Prostate gland (tissue), 2 donors: ENCODE measurements at regions of chr9 and their contacts with region 1.

Region 1: GRCh38 chr9:96566498-96567207 is 53.0 kb downstream of the CDC14B start:
- DNase-seq: peak; percentile 69
- H3K4me3 ChIP-seq: peak overlapping the region; percentile 57 to 67
- H3K27ac ChIP-seq: peak overlapping the region; percentile 88 to 91
- H3K4me1 ChIP-seq: peaks cover 6% of the 10 kb centered on the region
- H3K27me3 ChIP-seq: no peaks in the 10 kb centered on the region
- CTCF ChIP-seq: peak in 3 of 4 experiments; percentile 54 to 70 (median 61)
- POLR2A ChIP-seq: no peak

Region 2: GRCh38 chr9:96619491-96620154 is 53.0 kb after region 1 on chr9 and contains the start of gene CDC14B:
- intact Hi-C with region 1: loop called (anchors 5 kb)
- DNase-seq: peak; percentile 96
- H3K4me3 ChIP-seq: peak within 1 kb of the TSS; percentile 69 to 78
- H3K27ac ChIP-seq: peak within 1 kb of the TSS; percentile 88 to 92
- H3K4me1 ChIP-seq: no peaks in the 10 kb centered on the region
- H3K27me3 ChIP-seq: no peaks in the 10 kb centered on the region
- CTCF ChIP-seq: peak in 2 of 4 experiments; percentile 15 to 40
- POLR2A ChIP-seq: peak; percentile 62
- total RNA-seq, gene CDC14B: 27.0 to 34.7 TPM

Region 3: DNA sequence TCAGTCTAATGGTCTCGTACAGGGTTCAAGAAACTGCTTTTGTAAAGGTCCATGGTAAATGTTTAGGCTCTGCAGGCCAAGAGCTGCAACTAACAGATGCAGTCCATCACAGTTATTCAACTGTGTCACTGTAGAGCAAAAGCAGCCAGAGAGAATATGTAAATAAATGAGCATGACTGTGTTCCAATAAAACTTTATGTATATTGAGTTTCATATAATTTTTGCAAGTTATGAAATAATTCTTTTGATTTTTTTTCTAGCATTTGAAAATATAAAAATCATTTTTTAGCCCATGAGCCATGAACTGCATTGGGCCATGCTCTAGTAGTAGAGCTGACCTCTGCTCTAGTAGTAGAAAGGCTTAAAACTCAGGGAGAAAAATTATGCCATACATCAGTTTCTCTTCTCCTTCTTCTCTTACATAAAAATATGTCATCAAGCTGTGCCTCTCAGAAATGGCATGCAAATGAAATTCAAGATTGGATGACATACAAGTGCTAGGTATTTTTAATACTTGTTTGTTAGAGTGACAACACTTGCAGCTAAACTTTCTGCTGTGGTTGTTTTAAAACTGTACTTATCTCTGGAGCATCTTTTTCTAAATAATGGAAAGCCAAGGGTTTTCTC is 892.6 kb after region 1 on chr9:
- intact Hi-C with region 1: no loop called
- DNase-seq: no peak
- H3K4me3 ChIP-seq: no peak overlapping the region
- H3K27ac ChIP-seq: no peak overlapping the region
- H3K4me1 ChIP-seq: no peaks in the 10 kb centered on the region
- H3K27me3 ChIP-seq: no peaks in the 10 kb centered on the region
- CTCF ChIP-seq: no peak
- POLR2A ChIP-seq: no peak